ENCODE measurements at regions of chr5 and their contacts with region 1.

Region 1: DNA sequence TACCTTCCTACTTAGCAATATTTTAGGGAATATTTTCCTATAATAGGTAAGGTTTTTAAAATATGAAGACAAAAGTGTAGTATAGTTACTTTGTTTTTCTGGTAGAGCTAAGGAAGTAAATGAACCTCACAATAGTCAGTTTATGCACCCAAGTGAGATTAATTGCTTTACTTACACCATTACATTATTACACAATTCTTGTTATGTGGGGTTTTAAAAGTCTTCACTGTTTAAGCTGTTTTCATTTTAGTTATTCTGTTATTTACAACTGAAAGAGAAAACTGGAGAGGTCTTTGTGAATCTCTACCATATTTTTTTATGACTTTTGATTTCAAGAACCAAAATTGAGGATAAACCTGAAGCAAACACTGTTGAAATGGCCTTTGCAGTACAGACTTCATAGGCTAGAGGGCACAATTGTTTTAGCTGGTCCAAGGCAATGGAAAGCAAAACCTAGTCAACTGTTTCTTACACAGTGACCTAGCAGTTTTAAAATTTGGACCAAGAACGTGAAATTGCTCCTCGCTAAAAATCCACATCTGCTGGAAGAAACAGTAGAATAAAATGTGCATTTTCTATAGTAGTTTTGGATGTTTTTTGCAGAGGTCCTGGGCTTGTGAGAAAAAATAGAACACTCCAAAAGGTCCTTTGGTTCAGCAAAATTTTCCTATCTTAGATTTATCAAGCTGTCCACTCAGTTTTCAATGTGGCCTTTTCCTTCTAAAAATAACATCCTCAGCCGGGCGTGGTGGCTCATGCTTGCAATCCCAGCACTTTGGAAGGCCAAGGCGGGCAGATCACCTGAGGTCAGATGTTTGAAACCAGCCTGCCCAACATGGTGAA is 66.4 kb upstream of the FER start:
- DNase-seq: no peak
- ATAC-seq: peak; percentile 93
- H3K4me3 Mint-ChIP-seq: peak overlapping the region; percentile 29
- H3K27ac Mint-ChIP-seq: no peak overlapping the region
- H3K4me1 Mint-ChIP-seq: peaks cover 13% of the 10 kb centered on the region
- H3K27me3 Mint-ChIP-seq: peaks cover 1% of the 10 kb centered on the region
- CTCF ChIP-seq: no peak

Region 2: GRCh38 chr5:108642167-108642906 is 39.0 kb before region 1 on chr5:
- CTCF ChIA-PET with region 1: interaction called, 4 read pairs
- POLR2A ChIA-PET with region 1: no interaction called
- intact Hi-C with region 1: loop called (anchors 2 kb)
- DNase-seq: peak; percentile 20
- ATAC-seq: peak; percentile 77
- H3K4me3 Mint-ChIP-seq: no peak overlapping the region
- H3K27ac Mint-ChIP-seq: no peak overlapping the region
- H3K4me1 Mint-ChIP-seq: peaks cover 2% of the 10 kb centered on the region
- H3K27me3 Mint-ChIP-seq: peaks cover 5% of the 10 kb centered on the region
- CTCF ChIP-seq: peak; percentile 70

Region 3: GRCh38 chr5:108748401-108749127 is 67.3 kb after region 1 on chr5:
- CTCF ChIA-PET with region 1: no interaction called
- POLR2A ChIA-PET with region 1: interaction called, 7 read pairs
- intact Hi-C with region 1: loop called (anchors 1 kb)
- DNase-seq: peak; percentile 92
- ATAC-seq: peak; percentile 92
- H3K4me3 Mint-ChIP-seq: peak overlapping the region; percentile 92
- H3K27ac Mint-ChIP-seq: peak overlapping the region; percentile 94
- H3K4me1 Mint-ChIP-seq: peaks cover 22% of the 10 kb centered on the region
- H3K27me3 Mint-ChIP-seq: no peaks in the 10 kb centered on the region
- CTCF ChIP-seq: no peak

Region 4: DNA sequence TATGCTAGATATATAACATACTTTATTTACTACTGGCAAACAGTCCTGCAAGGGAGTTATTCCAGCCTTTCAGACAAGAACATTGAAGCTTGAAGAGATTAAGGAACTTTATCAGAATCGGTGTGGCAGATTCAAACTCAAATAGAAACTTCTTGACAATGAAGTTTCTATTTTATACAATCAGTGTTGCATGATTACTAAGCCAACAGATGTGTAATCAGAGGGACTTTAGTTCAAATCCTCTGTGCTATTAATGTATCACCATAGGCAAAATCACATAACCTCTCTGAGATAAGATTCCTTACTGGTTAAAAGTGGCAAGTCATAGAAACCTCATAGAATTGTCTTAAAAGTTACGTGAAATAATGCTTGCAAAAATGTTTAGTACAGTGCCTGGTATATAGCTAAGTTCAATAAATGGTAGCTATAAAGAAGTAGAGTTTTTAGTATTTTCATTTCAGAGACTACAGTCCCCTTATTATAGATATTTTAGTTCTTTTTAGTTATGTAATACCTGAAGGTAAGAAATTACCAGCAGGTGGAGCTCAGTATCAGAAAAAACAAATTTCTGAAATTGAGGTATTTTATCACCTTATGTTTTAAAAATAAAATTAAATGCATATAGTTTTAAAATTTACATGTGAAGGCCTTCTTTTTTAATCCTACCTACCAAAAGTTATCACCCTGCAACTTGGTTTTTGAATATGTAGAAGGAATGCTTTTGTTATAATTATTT is 238.5 kb after region 1 on chr5:
- CTCF ChIA-PET with region 1: interaction called, 4 read pairs
- POLR2A ChIA-PET with region 1: no interaction called
- intact Hi-C with region 1: loop called (anchors 5 kb)
- DNase-seq: no peak
- ATAC-seq: no peak
- H3K4me3 Mint-ChIP-seq: no peak overlapping the region
- H3K27ac Mint-ChIP-seq: no peak overlapping the region
- H3K4me1 Mint-ChIP-seq: peaks cover 4% of the 10 kb centered on the region
- H3K27me3 Mint-ChIP-seq: no peaks in the 10 kb centered on the region
- CTCF ChIP-seq: no peak

Region 5: DNA sequence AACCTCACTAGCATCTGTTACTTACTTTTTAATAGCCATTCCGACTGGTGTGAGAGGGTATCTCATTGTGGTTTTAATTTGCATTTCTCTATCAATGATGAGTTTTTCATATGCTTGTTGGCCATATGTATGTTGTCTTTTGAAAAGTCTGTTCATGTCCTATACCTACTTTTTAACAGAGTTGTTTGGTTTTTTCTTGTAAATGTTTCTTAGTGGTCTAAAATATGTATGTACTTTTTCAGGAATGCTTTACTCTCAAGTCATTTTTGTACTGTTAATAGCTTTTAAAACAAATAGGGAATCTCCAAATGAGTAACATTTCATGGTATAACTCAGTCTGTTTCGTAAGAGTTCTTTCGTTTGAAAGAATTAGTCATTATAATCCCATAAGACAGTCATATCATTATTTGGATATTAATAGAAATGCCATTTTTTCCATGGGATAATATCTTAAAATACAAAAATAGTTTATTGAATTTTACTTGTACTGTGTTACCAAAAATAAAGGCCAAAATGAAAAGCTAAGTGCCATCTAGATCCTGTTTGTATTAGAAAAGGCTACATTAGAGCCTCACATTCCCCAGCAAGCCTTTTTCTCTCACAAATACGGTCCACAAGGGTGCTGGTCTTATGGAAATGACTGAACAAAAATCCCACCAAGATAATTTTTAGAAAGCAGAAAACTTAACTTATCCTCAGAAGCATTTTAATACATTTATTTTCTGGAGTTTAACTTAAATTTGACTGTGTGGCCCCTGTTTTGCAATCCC is 480.8 kb after region 1 on chr5:
- CTCF ChIA-PET with region 1: no interaction called
- POLR2A ChIA-PET with region 1: no interaction called
- intact Hi-C with region 1: loop called (anchors 10 kb)
- DNase-seq: no peak
- ATAC-seq: no peak
- H3K4me3 Mint-ChIP-seq: no peak overlapping the region
- H3K27ac Mint-ChIP-seq: peak overlapping the region; percentile 51
- H3K4me1 Mint-ChIP-seq: peaks cover 31% of the 10 kb centered on the region
- H3K27me3 Mint-ChIP-seq: no peaks in the 10 kb centered on the region
- CTCF ChIP-seq: no peak

Region 6: DNA sequence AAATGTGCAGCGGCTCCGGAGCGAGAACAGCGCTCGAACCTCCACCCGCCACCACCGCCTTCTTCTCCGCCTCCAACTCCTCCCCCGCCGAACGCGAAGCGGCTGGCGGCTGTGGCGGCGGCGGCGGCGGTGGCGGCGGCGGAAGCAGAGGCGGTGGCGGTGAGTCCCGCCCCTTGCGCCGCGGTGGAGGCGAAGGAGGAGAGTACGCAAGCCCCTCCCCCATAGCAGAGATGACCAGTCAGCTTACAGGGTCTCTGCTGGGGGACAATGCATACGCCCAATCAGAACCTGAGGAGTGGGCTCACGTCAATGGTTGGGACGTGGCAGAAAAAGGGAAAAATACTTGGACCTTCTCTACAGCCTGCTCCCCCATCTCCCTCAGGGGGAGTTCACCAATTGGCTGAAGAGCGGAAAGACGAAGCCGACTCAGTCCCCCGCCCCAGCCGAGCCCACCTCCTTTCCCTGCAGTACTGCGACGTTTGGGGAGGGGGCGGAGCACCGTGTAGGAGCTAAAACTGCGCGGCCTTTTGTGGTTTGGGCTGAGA is 728.6 kb after region 1 on chr5 and contains the start of gene PJA2:
- CTCF ChIA-PET with region 1: no interaction called
- POLR2A ChIA-PET with region 1: no interaction called
- intact Hi-C with region 1: loop called (anchors 1 kb)
- DNase-seq: peak; percentile 96
- ATAC-seq: peak; percentile 86
- H3K4me3 Mint-ChIP-seq: peak within 1 kb of the TSS; percentile 99
- H3K27ac Mint-ChIP-seq: peak within 1 kb of the TSS; percentile 94
- H3K4me1 Mint-ChIP-seq: peaks cover 49% of the 10 kb centered on the region
- H3K27me3 Mint-ChIP-seq: no peaks in the 10 kb centered on the region
- CTCF ChIP-seq: no peak
- total RNA-seq, gene PJA2: 55.3 and 58.0 TPM in 2 replicates

Region 7: GRCh38 chr5:109468737-109469420 is 787.6 kb after region 1 on chr5:
- CTCF ChIA-PET with region 1: interaction called, 3 read pairs
- POLR2A ChIA-PET with region 1: no interaction called
- intact Hi-C with region 1: loop called (anchors 1 kb)
- DNase-seq: peak; percentile 55
- ATAC-seq: peak; percentile 93
- H3K4me3 Mint-ChIP-seq: no peak overlapping the region
- H3K27ac Mint-ChIP-seq: no peak overlapping the region
- H3K4me1 Mint-ChIP-seq: peaks cover 6% of the 10 kb centered on the region
- H3K27me3 Mint-ChIP-seq: no peaks in the 10 kb centered on the region
- CTCF ChIP-seq: no peak

Measured in activated B cell treated with CpG ODN at 0.5 μM for 24 hours (primary cell).